Posterior cingulate gyrus (tissue), 11 donors: ENCODE measurements at regions of chr11 and their contacts with region 1.

Region 1: GRCh38 chr11:134634897-134635831 is 223.1 kb upstream of the B3GAT1 start:
- DNase-seq: peak in 5 of 10 donors; percentile 24 to 92 (median 39)

Region 2: DNA sequence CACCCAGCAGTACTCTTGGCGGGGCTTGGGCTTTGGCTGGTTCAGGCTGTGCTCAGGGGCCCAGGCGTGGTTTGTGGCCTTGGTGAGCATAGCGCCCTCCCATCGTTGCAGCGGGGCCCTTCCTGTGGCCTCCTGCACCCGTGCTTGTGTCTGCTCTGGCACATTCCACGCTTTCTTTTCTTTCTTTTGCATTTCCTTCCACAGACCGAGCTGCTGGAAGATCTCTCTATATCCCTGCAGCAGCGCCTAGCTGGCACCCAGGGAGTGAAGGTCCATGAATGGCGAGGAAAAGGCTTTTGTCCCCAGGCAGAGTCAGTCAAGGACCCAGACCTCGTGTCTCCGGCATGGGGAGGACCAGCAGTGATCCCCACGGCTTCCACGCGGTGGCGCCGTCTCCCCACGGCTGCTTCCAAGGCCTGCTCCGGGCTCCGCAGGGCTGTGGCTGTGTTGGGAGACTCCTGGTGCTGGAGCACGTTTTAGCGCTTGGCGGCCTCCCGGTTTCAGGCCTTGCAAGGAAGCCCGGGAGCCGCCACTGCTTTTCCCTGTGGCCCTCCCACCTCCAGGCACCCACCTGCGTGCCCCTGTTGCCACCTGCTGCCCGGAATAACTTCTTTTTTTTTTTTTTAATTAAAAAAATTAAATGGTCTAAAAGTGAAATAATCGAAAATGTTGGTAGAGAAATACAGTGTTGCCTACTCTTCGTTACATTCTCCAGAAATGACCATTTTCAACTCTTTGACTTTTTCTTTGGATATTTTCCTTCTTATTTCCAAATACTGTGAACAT is 274.9 kb before region 1 on chr11:
- intact Hi-C with region 1: loop called (anchors 1 kb)
- DNase-seq: peak; percentile 81 to 99 (median 92)